ENCODE measurements at regions of chr11 and their contacts with region 1.

Region 1: GRCh38 chr11:101456812-101457211 is 127.0 kb downstream of the TRPC6 start:
- DNase-seq: no peak
- H3K4me3 ChIP-seq: no peak overlapping the region
- H3K27ac ChIP-seq: no peak overlapping the region
- H3K27me3 ChIP-seq: peaks cover 0 to 7% (median 0%) of the 10 kb centered on the region in 45 donors
- CTCF ChIP-seq: peak in 53 of 56 donors; percentile 16 to 74 (median 49)

Region 2: GRCh38 chr11:101848262-101848661 is 391.4 kb after region 1 on chr11:
- intact Hi-C with region 1: loop called in 1 of 2 experiments (anchors 10 kb)
- DNase-seq: no peak
- H3K4me3 ChIP-seq: no peak overlapping the region
- H3K27ac ChIP-seq: no peak overlapping the region
- H3K27me3 ChIP-seq: no peaks in the 10 kb centered on the region
- CTCF ChIP-seq: peak; percentile 31 to 79 (median 58)